Activated naive CD4-positive, alpha-beta T cell treated with anti-CD3 and anti-CD28 coated beads for 36 hours (primary cell): ENCODE measurements at regions of chr16 and their contacts with region 1.

Region 1: GRCh38 chr16:30657866-30658730 is at the start of gene FBRS:
- DNase-seq: peak; percentile 100
- H3K4me3 Mint-ChIP-seq: peak within 1 kb of the TSS; percentile 99
- H3K27ac Mint-ChIP-seq: peak within 1 kb of the TSS; percentile 100
- H3K4me1 Mint-ChIP-seq: peaks cover 42% of the 10 kb centered on the region
- H3K27me3 Mint-ChIP-seq: no peaks in the 10 kb centered on the region
- total RNA-seq, gene FBRS: 83.8 to 84.8 TPM

Region 2: DNA sequence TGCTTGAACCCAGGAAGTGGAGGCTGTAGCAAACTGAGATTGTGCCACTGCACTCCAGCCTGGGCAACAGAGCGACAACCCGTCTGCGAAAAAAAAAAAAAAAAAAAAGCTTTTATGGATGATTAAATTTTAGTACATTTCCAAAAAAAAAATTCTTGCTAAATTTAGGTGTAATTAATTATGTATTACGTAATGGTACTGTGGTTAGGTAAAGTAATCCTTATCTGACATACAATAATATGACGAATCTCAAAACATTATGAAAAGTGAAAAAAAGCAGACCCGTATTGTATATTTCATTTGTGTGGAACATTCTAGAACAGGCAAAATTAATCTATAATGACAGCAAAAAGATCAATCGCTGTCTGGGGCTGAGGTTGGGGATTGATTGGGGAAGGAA is 485.0 kb before region 1 on chr16:
- CTCF ChIA-PET with region 1: no interaction called
- intact Hi-C with region 1: no loop called
- DNase-seq: no peak
- H3K4me3 Mint-ChIP-seq: no peak overlapping the region
- H3K27ac Mint-ChIP-seq: no peak overlapping the region
- H3K4me1 Mint-ChIP-seq: peaks cover 2% of the 10 kb centered on the region
- H3K27me3 Mint-ChIP-seq: no peaks in the 10 kb centered on the region

Region 3: DNA sequence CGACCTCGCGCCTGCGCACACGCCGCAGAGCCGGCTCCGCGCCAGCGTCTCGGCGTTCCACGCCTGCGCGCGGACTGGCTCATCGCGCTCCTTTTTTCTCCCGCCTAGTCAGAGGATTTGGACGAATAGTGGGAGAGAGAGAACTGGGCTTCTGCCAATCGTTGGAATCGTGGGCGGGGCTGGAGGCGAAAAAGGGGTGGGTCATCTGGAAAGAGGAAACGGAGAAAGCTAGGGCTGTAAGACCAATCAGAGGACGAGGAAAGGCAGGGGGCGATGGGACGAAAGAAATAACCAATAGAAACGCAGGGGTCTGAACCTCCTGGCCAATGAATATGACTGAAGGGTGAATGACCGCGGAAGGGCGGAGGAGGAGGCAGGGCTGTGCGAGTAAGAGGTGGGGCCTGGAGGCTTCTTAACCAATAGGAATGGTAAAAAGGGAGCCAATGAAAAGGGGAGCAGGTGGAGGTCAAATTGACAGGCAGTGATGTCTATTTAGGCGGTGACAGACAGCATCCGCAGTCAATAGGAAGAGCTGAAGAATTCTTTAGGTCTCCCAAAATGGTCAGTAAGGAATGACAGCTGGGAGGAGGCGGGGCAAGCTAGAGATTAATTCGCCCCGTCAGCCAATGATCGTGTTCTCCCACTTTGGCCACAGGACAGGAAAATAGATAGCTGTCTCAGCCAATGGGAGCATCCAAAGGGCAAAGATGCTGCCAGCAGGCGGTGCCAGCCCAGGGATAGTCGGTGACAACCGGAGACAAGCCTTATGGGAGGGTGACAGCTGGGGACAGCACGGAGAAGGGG is 287.5 kb before region 1 on chr16 and contains the start of gene TBC1D10B:
- CTCF ChIA-PET with region 1: no interaction called
- intact Hi-C with region 1: loop called (anchors 2 kb)
- DNase-seq: peak; percentile 100
- H3K4me3 Mint-ChIP-seq: peak within 1 kb of the TSS; percentile 94
- H3K27ac Mint-ChIP-seq: peak within 1 kb of the TSS; percentile 98
- H3K4me1 Mint-ChIP-seq: peaks cover 40% of the 10 kb centered on the region
- H3K27me3 Mint-ChIP-seq: no peaks in the 10 kb centered on the region
- total RNA-seq, gene TBC1D10B: 36.6 to 38.4 TPM

Region 4: GRCh38 chr16:30534368-30535105 is 123.6 kb before region 1 on chr16 and contains the start of gene ZNF747:
- CTCF ChIA-PET with region 1: interaction called, 3 read pairs
- intact Hi-C with region 1: loop called (anchors 2 kb)
- DNase-seq: peak; percentile 94
- H3K4me3 Mint-ChIP-seq: peak within 1 kb of the TSS; percentile 96
- H3K27ac Mint-ChIP-seq: peak within 1 kb of the TSS; percentile 99
- H3K4me1 Mint-ChIP-seq: peaks cover 49% of the 10 kb centered on the region
- H3K27me3 Mint-ChIP-seq: no peaks in the 10 kb centered on the region
- total RNA-seq, gene ZNF747: 5.1 to 6.1 TPM

Region 5: DNA sequence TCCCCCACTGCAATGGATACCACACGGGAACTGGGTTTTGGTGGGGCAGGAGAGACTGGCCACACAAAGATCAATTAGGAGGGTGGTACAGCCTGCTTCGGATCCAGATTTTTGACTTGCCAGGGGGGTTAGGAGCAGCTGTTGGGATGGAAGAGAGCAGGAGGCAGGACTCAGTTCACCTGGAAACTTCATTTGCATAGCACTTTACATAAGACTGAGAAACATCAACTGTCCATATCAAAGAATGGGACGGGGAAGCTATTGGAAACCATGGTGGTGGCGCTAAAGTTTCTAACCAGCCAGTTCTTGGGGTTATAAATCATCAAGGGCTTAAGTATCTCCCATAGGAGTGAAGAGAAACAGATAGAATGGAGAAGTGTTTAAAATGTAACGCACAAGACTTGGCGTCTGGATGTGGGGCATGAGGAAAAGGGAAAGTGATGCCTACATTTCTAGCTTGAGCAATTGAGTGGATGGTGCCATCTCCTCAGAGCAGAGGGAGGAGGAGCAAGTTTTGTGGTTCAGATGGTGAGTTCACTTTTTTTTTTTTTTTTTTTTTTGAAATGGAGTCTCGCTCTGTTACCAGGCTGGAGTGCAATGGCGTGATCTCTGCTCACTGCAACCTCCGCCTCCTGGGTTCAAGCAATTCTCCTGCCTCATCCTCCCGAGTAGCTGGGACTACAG is 34.4 kb after region 1 on chr16:
- CTCF ChIA-PET with region 1: interaction called, 42 read pairs
- intact Hi-C with region 1: loop called (anchors 1 kb)
- DNase-seq: no peak
- H3K4me3 Mint-ChIP-seq: no peak overlapping the region
- H3K27ac Mint-ChIP-seq: no peak overlapping the region
- H3K4me1 Mint-ChIP-seq: peaks cover 15% of the 10 kb centered on the region
- H3K27me3 Mint-ChIP-seq: no peaks in the 10 kb centered on the region

Region 6: DNA sequence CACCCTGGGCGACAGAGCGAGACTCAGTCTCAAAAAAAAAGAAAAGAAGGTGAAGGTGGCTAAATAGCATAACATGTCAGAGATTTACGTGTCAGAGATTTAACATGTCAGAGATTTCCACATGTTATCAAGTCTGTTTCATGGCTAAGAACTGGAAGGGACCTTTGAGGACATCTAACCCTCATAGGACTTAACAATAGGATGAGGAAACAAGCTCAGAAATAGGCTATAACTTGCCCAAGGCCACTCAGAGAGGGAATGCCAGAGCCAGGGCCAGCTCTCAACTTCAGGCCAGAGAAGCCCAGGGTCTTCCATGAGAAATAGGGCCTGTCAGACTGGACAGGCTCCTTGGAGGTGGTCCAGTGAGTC is 155.7 kb after region 1 on chr16:
- CTCF ChIA-PET with region 1: no interaction called
- intact Hi-C with region 1: loop called (anchors 2 kb)
- DNase-seq: no peak
- H3K4me3 Mint-ChIP-seq: peak overlapping the region; percentile 76
- H3K27ac Mint-ChIP-seq: peak overlapping the region; percentile 38
- H3K4me1 Mint-ChIP-seq: peaks cover 14% of the 10 kb centered on the region
- H3K27me3 Mint-ChIP-seq: no peaks in the 10 kb centered on the region

Region 7: DNA sequence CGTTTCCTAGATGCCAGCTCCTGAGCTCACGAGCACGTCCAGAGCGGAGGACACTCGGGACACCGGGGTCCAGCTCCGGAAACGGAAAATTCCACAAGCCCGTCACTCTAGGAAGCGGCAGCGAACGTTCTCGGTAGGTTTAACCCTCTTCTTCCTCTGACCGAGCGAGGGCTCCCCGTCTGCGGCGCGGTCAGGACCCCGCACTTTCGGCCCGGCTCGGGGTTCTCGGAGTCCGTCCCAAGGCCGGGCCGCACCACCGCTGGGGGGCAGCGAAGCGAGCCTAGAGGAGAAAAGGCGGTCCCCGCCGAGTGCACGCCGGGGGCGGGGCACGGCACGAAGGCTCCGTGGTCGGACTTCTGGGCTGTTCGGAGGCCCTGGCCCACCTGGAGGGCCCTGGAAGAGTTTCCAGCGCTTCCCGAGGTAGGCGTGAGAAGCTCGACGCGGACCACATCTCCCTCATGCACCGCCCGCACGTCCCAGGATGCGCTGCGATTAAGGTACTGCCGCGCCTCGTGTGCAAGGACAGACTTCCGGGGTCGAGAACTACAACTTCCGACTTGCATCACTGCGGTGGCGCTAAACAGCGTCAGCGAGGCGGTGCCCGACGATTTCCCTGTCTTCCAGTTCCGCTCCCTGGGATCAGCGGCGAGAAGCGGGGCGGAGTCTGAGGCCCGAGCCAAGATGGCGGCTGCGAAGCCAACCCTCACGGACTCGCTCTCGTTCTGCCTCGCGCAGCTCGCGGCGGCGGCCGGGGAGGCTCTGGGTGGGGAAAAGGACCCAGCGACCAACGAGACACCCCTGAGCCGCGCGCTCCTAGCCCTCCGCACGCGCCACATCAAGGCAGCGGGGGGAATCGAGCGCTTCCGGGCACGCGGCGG is 801.0 kb after region 1 on chr16 and contains the start of gene ARMC5:
- CTCF ChIA-PET with region 1: no interaction called
- intact Hi-C with region 1: loop called (anchors 2 kb)
- DNase-seq: peak; percentile 99
- H3K4me3 Mint-ChIP-seq: peak within 1 kb of the TSS; percentile 87
- H3K27ac Mint-ChIP-seq: peak within 1 kb of the TSS; percentile 94
- H3K4me1 Mint-ChIP-seq: peaks cover 41% of the 10 kb centered on the region
- H3K27me3 Mint-ChIP-seq: no peaks in the 10 kb centered on the region
- total RNA-seq, gene ARMC5: 6.3 to 6.7 TPM